Heart left ventricle (tissue), 16 donors: ENCODE measurements at regions of chr13 and their contacts with region 1.

Region 1: GRCh38 chr13:74217811-74218210 is 83.6 kb upstream of the KLF12 start:
- DNase-seq: no peak
- ATAC-seq: no peak
- H3K4me3 ChIP-seq: no peak overlapping the region
- H3K27ac ChIP-seq: no peak overlapping the region
- H3K4me1 ChIP-seq: no peaks in the 10 kb centered on the region
- H3K27me3 ChIP-seq: no peaks in the 10 kb centered on the region
- CTCF ChIP-seq: no peak
- POLR2A ChIP-seq: no peak

Region 2: GRCh38 chr13:74145249-74145975 is 72.4 kb before region 1 on chr13:
- intact Hi-C with region 1: loop called in 1 of 10 experiments (anchors 2 kb)
- DNase-seq: no peak
- ATAC-seq: peak in 2 of 4 donors; percentile 47 to 60
- H3K4me3 ChIP-seq: no peak overlapping the region
- H3K27ac ChIP-seq: no peak overlapping the region
- H3K4me1 ChIP-seq: peaks cover 0 to 16% (median 8%) of the 10 kb centered on the region in 12 donors
- H3K27me3 ChIP-seq: no peaks in the 10 kb centered on the region
- CTCF ChIP-seq: no peak
- POLR2A ChIP-seq: no peak